Caco-2 (cell line): ENCODE measurements at regions of chr6 and their contacts with region 1.

Region 1: GRCh38 chr6:107977283-107977682 is 19.3 kb upstream of the SEC63 start:
- DNase-seq: peak in 1 of 2 experiments; percentile 40
- H3K4me3 ChIP-seq: no peak overlapping the region
- H3K4me3 Mint-ChIP-seq: no peak overlapping the region
- H3K27ac Mint-ChIP-seq: no peak overlapping the region
- H3K4me1 ChIP-seq: peaks cover 7% of the 10 kb centered on the region; the same call in 1 of the 2 replicates
- H3K4me1 Mint-ChIP-seq: peaks cover 16% of the 10 kb centered on the region
- H3K27me3 ChIP-seq: no peaks in the 10 kb centered on the region
- H3K27me3 Mint-ChIP-seq: no peaks in the 10 kb centered on the region
- CTCF ChIP-seq: peak; percentile 39 to 64

Region 2: DNA sequence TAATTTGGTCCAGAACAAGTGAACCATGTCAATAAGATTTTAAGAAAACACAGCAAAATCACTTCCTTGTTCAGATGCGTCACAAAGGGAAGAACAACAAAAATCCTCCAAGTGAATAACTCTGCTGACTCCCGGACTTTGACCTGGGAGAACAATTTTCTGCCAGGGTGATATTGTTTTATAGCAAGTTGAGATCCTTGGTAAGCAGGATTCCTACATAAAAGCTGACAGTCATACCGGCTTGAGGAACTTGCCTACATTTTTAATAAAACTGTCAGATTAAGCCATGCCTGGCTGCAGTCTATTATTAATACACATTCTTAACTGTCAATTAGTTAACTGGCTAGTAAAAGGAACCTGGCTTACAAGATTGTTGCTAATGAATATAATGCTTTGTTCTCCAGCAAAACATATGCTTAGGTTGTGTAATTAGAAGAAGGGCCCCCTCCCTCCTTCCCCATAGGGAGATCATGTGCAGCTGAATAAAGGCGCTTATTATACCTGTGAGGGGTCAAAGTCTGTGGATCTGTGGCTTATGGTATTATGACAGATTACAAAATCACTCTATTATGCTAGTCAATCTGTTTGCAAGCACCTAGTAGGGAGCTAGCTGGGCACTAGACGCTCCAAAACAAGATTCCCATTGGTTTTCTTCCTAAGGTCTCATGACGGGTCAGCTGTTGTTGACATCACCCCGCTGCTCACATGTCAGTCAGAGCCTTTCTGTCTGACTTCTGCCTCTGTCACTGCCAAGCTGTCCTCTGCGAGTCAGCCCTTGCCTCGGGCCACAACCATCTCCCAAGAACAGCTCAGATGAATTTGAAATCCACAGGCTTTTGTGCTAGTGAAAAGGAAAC is 25.3 kb after region 1 on chr6:
- CTCF ChIA-PET with region 1: interaction called, 4 read pairs
- POLR2A ChIA-PET with region 1: no interaction called
- intact Hi-C with region 1: loop called (anchors 1 kb)
- DNase-seq: peak; percentile 64 to 70
- H3K4me3 ChIP-seq: no peak overlapping the region
- H3K4me3 Mint-ChIP-seq: peak overlapping the region; percentile 44
- H3K27ac Mint-ChIP-seq: peak overlapping the region; percentile 91
- H3K4me1 ChIP-seq: peaks cover 29% of the 10 kb centered on the region
- H3K4me1 Mint-ChIP-seq: peaks cover 14% of the 10 kb centered on the region
- H3K27me3 ChIP-seq: no peaks in the 10 kb centered on the region
- H3K27me3 Mint-ChIP-seq: no peaks in the 10 kb centered on the region
- CTCF ChIP-seq: no peak

Region 3: GRCh38 chr6:108052706-108053105 is 75.4 kb after region 1 on chr6:
- CTCF ChIA-PET with region 1: interaction called, 21 read pairs
- POLR2A ChIA-PET with region 1: no interaction called
- intact Hi-C with region 1: loop called (anchors 1 kb)
- DNase-seq: no peak
- H3K4me3 ChIP-seq: no peak overlapping the region
- H3K4me3 Mint-ChIP-seq: no peak overlapping the region
- H3K27ac Mint-ChIP-seq: no peak overlapping the region
- H3K4me1 ChIP-seq: no peaks in the 10 kb centered on the region
- H3K4me1 Mint-ChIP-seq: no peaks in the 10 kb centered on the region
- H3K27me3 ChIP-seq: no peaks in the 10 kb centered on the region
- H3K27me3 Mint-ChIP-seq: no peaks in the 10 kb centered on the region
- CTCF ChIP-seq: no peak

Region 4: DNA sequence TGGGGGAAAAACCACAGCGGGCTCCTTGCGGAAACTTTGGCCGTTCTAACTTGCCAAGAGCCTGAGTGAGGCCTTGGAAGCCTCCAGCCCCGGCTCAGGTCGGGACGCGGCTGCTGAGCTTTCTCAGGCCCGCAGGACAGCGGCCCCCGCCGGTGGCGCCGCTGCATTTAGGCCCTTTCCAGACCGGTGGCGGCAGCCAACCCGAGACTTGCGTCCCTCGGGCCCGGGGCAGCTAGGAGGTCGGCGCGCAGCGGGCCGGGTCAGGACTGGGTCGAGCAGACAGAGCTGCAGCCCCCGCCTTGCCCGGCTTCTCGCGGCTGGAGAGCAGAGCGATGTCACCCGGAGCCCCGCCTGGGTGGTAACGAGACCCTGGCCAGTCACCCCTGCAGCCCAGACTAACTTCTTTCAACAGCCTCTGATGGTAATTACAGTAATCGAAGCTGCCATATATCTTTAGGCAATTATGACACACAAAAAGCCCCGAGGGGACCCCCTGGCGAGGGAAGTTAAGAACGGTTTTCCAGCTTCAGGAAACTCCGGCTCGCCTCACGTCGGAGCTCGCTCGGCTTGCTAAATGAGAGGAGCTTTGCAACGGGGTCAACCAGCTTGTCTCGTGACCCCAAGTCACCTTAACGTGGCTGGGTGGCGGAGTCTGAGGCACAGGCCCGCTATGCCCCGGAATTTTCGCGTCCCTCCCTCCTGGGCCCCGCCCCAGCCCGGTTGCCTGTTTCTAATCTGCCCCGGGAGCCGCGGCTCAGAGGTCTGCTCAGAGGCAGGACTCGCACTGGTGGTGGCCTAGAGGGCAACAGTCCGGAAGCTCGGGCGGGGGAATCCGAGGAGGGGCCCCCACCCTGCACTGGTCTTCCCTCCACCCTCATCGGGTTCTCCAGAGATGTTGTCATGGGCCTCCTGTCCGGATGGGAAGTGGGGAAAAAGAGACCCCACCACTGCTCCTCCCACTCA is 191.5 kb after region 1 on chr6:
- CTCF ChIA-PET with region 1: no interaction called
- POLR2A ChIA-PET with region 1: no interaction called
- intact Hi-C with region 1: no loop called
- DNase-seq: no peak
- H3K4me3 ChIP-seq: no peak overlapping the region
- H3K4me3 Mint-ChIP-seq: no peak overlapping the region
- H3K27ac Mint-ChIP-seq: no peak overlapping the region
- H3K4me1 ChIP-seq: no peaks in the 10 kb centered on the region
- H3K4me1 Mint-ChIP-seq: peaks cover 14% of the 10 kb centered on the region
- H3K27me3 ChIP-seq: no peaks in the 10 kb centered on the region
- H3K27me3 Mint-ChIP-seq: peaks cover 3% of the 10 kb centered on the region
- CTCF ChIP-seq: no peak

Region 5: GRCh38 chr6:108193120-108193519 is 215.8 kb after region 1 on chr6:
- CTCF ChIA-PET with region 1: no interaction called
- POLR2A ChIA-PET with region 1: interaction called, 23 read pairs
- intact Hi-C with region 1: no loop called
- DNase-seq: no peak
- H3K4me3 ChIP-seq: no peak overlapping the region
- H3K4me3 Mint-ChIP-seq: no peak overlapping the region
- H3K27ac Mint-ChIP-seq: no peak overlapping the region
- H3K4me1 ChIP-seq: no peaks in the 10 kb centered on the region
- H3K4me1 Mint-ChIP-seq: no peaks in the 10 kb centered on the region
- H3K27me3 ChIP-seq: no peaks in the 10 kb centered on the region
- H3K27me3 Mint-ChIP-seq: no peaks in the 10 kb centered on the region
- CTCF ChIP-seq: no peak

Region 6: DNA sequence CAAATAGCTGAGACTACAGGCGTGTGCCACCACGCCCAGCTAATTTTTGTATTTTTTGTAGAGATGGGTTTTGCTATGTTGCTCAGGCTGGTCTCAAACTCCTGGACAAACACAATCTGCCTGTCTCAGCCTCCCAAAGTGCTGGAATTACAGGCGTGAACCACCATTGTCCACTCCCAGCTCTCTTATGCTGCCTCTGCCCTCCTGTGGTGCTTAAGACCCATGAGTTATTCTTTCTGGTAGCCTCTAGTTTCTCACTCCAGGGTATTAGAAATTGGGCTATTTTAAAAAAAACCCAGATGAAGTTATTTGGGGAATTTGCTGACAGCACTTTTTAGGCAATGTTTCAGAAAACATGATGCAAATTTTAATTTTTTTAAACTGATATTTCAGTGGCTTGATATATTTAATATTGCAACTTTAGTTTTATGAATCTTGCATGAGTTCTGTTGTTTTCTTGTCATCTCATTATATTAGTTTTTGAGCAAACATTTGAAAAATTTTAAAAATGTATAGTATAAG is 469.4 kb after region 1 on chr6:
- CTCF ChIA-PET with region 1: interaction called, 10 read pairs
- POLR2A ChIA-PET with region 1: no interaction called
- intact Hi-C with region 1: no loop called
- DNase-seq: no peak
- H3K4me3 ChIP-seq: no peak overlapping the region
- H3K4me3 Mint-ChIP-seq: no peak overlapping the region
- H3K27ac Mint-ChIP-seq: no peak overlapping the region
- H3K4me1 ChIP-seq: no peaks in the 10 kb centered on the region
- H3K4me1 Mint-ChIP-seq: no peaks in the 10 kb centered on the region
- H3K27me3 ChIP-seq: no peaks in the 10 kb centered on the region
- H3K27me3 Mint-ChIP-seq: no peaks in the 10 kb centered on the region
- CTCF ChIP-seq: no peak

Region 7: GRCh38 chr6:108526739-108527174 is 549.5 kb after region 1 on chr6:
- CTCF ChIA-PET with region 1: no interaction called
- POLR2A ChIA-PET with region 1: no interaction called
- intact Hi-C with region 1: loop called (anchors 1 kb)
- DNase-seq: peak in 1 of 2 experiments; percentile 31
- H3K4me3 ChIP-seq: no peak overlapping the region
- H3K4me3 Mint-ChIP-seq: no peak overlapping the region
- H3K27ac Mint-ChIP-seq: no peak overlapping the region
- H3K4me1 ChIP-seq: peaks cover 8% of the 10 kb centered on the region
- H3K4me1 Mint-ChIP-seq: peaks cover 9% of the 10 kb centered on the region
- H3K27me3 ChIP-seq: no peaks in the 10 kb centered on the region
- H3K27me3 Mint-ChIP-seq: no peaks in the 10 kb centered on the region
- CTCF ChIP-seq: peak; percentile 69 to 78